Endothelial cell of umbilical vein (primary cell): ENCODE measurements at regions of chr11 and their contacts with region 1.

Region 1: GRCh38 chr11:18749697-18750319 is 23.8 kb upstream of the IGSF22 start:
- DNase-seq: peak; percentile 84
- H3K4me3 ChIP-seq: no peak overlapping the region
- H3K27ac ChIP-seq: peak overlapping the region; percentile 55
- H3K4me1 ChIP-seq: peaks cover 12% of the 10 kb centered on the region
- H3K27me3 ChIP-seq: no peaks in the 10 kb centered on the region
- CTCF ChIP-seq: no peak
- POLR2A ChIP-seq: peak; percentile 28

Region 2: GRCh38 chr11:18698341-18699268 is 51.2 kb before region 1 on chr11 and contains the start of gene TMEM86A:
- CTCF ChIA-PET with region 1: no interaction called
- POLR2A ChIA-PET with region 1: no interaction called
- dilution Hi-C with region 1: no loop called
- intact Hi-C with region 1: loop called (anchors 1 kb)
- DNase-seq: peak; percentile 88
- H3K4me3 ChIP-seq: peak within 1 kb of the TSS; percentile 30 to 59 (median 48)
- H3K27ac ChIP-seq: no peak within 1 kb of the TSS
- H3K4me1 ChIP-seq: peaks cover 11% of the 10 kb centered on the region
- H3K27me3 ChIP-seq: no peaks in the 10 kb centered on the region
- CTCF ChIP-seq: no peak
- POLR2A ChIP-seq: peak; percentile 32
- total RNA-seq, gene TMEM86A: 2.5 and 2.6 TPM in 2 replicates

Region 3: DNA sequence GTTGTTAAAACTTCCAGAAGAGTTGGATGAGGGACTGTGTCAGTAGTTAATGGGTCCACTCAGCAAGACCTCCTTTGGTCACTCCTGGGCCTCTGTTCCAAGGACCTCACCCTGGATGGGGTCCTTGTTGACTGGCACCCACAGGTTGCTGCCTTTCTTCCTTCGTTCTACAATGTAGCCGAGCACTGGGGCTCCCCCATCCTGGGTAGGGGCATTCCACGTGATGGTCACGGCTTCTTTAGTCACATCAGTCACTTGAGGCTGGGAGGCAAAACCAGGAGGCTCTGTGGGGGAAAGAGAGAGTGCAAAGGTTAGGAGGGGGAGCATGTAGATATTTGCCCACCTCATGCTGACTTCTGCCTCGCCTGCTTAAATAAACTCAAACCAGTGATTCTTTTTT is 39.3 kb before region 1 on chr11:
- CTCF ChIA-PET with region 1: no interaction called
- POLR2A ChIA-PET with region 1: no interaction called
- dilution Hi-C with region 1: no loop called
- intact Hi-C with region 1: no loop called
- DNase-seq: no peak
- H3K4me3 ChIP-seq: no peak overlapping the region
- H3K27ac ChIP-seq: no peak overlapping the region
- H3K4me1 ChIP-seq: peaks cover 5% of the 10 kb centered on the region
- H3K27me3 ChIP-seq: peaks cover 13 to 21% of the 10 kb centered on the region in 2 experiments
- CTCF ChIP-seq: no peak
- POLR2A ChIP-seq: no peak

Region 4: GRCh38 chr11:18731949-18732821 is 17.6 kb before region 1 on chr11:
- CTCF ChIA-PET with region 1: interaction called, 16 read pairs
- POLR2A ChIA-PET with region 1: no interaction called
- dilution Hi-C with region 1: no loop called
- intact Hi-C with region 1: no loop called
- DNase-seq: peak; percentile 60
- H3K4me3 ChIP-seq: no peak overlapping the region
- H3K27ac ChIP-seq: no peak overlapping the region
- H3K4me1 ChIP-seq: no peaks in the 10 kb centered on the region
- H3K27me3 ChIP-seq: peaks cover 0 to 3% of the 10 kb centered on the region in 2 experiments
- CTCF ChIP-seq: peak; percentile 92 to 93
- POLR2A ChIP-seq: no peak

Region 5: GRCh38 chr11:18912883-18913282 is 163.1 kb after region 1 on chr11:
- CTCF ChIA-PET with region 1: no interaction called
- POLR2A ChIA-PET with region 1: no interaction called
- dilution Hi-C with region 1: no loop called
- intact Hi-C with region 1: no loop called
- DNase-seq: no peak
- H3K4me3 ChIP-seq: no peak overlapping the region
- H3K27ac ChIP-seq: no peak overlapping the region
- H3K4me1 ChIP-seq: no peaks in the 10 kb centered on the region
- H3K27me3 ChIP-seq: peaks cover 3 to 4% of the 10 kb centered on the region in 2 experiments
- CTCF ChIP-seq: no peak
- POLR2A ChIP-seq: no peak